ENCODE measurements at regions of chr3 and their contacts with region 1.

Region 1: GRCh38 chr3:193701904-193702635 is 109.1 kb downstream of the OPA1 start:
- DNase-seq: no peak
- H3K4me3 ChIP-seq: no peak overlapping the region
- H3K27ac ChIP-seq: peak overlapping the region; percentile 21 to 82
- H3K4me1 ChIP-seq: peaks cover 13 to 14% of the 10 kb centered on the region in 2 donors
- H3K27me3 ChIP-seq: no peaks in the 10 kb centered on the region
- CTCF ChIP-seq: no peak

Region 2: GRCh38 chr3:193665370-193665989 is 36.6 kb before region 1 on chr3:
- intact Hi-C with region 1: loop called (anchors 5 kb)
- DNase-seq: no peak
- H3K4me3 ChIP-seq: no peak overlapping the region
- H3K27ac ChIP-seq: no peak overlapping the region
- H3K4me1 ChIP-seq: no peaks in the 10 kb centered on the region
- H3K27me3 ChIP-seq: no peaks in the 10 kb centered on the region
- CTCF ChIP-seq: peak in 2 of 3 experiments; percentile 38 to 43